ENCODE measurements at regions of chr5 and their contacts with region 1.

Region 1: DNA sequence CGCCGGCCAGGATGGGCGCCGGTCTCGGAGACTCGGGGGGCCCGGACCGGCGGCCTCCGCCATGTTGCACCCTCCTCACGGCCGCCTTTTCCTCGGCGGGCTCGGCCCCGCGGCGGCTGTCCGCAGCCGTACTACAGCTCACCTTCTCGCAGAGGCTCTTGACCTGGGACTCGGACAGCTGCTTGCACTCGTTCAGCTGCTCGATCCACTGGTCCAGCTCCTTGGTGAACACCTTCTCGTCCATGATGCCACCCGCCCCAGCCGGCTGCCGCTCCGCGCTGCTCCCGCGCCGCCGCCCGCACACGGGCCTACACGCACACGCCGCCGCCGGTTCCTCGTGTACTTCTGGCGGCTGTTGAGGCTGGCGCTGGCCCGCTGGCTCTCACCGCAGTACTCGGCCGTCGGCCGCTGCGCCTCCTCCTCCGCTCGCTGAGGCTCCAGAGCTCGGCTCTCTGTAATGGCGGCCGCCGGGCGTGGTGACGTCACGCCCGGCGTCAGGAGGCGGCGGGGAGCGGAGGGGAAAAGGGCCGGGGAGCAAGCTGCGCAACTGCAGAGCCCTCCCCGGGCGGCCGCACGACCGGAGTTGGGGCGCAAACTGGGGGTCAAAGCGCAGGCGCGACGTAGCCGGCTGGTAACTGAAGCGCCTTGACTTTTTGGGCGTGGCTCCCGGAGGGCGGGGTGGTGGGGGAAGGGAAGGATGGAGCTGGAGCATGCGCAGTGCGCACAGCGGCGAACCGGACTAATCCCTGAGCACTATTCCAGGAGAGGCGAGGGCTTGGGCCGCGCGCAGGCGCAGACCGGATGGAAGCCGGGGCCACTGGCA is at the start of gene PPP2CA:
- DNase-seq: peak; percentile 99
- ATAC-seq: peak; percentile 88
- H3K4me3 Mint-ChIP-seq: peak within 1 kb of the TSS; percentile 97
- H3K27ac Mint-ChIP-seq: peak within 1 kb of the TSS; percentile 98
- H3K4me1 Mint-ChIP-seq: peaks cover 47% of the 10 kb centered on the region
- H3K27me3 Mint-ChIP-seq: no peaks in the 10 kb centered on the region
- total RNA-seq, gene PPP2CA: 148 to 154 TPM

Region 2: GRCh38 chr5:132963175-132964104 is 1262.4 kb before region 1 on chr5 and contains the start of gene AFF4:
- CTCF ChIA-PET with region 1: no interaction called
- POLR2A ChIA-PET with region 1: interaction called, 3 read pairs
- intact Hi-C with region 1: loop called in 1 of 2 experiments (anchors 5 kb)
- DNase-seq: peak; percentile 94
- ATAC-seq: peak; percentile 92
- H3K4me3 Mint-ChIP-seq: peak within 1 kb of the TSS; percentile 96
- H3K27ac Mint-ChIP-seq: peak within 1 kb of the TSS; percentile 99
- H3K4me1 Mint-ChIP-seq: peaks cover 32% of the 10 kb centered on the region
- H3K27me3 Mint-ChIP-seq: no peaks in the 10 kb centered on the region
- total RNA-seq, gene AFF4: 20.9 to 29.3 TPM

Region 3: DNA sequence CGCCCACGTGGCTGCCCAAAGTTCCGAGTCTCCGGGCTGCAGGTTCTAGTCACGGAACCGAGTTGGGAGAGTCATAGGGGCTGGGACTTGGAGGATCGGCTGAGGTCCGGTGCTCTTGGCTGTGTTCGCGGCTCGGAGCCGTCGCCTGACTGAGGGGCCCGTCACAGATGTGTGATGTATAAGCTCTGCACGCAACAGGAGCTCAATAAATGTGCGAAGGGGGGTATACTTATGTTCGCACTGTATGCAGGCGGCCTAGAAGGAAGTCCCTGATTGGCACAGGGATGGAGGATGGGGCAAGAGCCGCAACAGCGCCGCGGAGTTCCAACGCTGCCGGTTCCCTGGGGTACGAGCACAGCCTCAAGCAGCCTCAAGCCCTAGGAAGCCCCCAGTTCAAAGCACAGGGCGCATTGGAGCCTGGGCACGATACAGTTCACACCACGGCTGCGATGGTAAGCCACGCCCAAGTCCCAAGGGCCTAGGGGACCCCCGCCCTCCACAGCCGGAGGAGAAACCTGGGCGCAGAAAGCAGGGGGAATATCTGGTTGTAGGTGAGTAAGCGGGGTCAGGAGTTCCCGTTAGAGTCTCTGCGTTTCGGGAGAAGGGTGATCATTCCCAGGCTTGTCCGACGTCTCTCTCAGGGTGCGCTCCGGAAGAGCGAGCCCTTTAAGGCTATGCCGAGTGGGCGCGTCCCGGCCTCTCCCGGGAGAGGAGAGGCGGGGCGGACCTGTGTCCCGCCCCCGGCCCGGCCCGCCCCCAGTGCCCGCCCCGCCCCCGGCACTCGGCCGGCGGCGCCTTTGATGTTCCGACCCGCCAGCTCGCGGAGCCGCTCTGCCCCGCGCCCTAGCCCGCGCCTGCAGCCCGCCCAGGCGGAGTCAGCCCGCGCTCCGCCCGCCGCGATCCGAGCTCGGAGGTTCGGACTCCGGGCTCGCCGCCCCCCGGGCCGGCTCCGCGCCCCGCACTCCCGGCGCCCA is 111.6 kb before region 1 on chr5 and contains the start of gene TCF7:
- CTCF ChIA-PET with region 1: no interaction called
- POLR2A ChIA-PET with region 1: no interaction called
- intact Hi-C with region 1: loop called in 1 of 2 experiments (anchors 5 kb)
- DNase-seq: peak; percentile 88
- ATAC-seq: peak; percentile 40
- H3K4me3 Mint-ChIP-seq: peak within 1 kb of the TSS; percentile 85
- H3K27ac Mint-ChIP-seq: peak within 1 kb of the TSS; percentile 97
- H3K4me1 Mint-ChIP-seq: peaks cover 61% of the 10 kb centered on the region
- H3K27me3 Mint-ChIP-seq: no peaks in the 10 kb centered on the region
- total RNA-seq, gene TCF7: 94.8 to 117 TPM

Region 4: DNA sequence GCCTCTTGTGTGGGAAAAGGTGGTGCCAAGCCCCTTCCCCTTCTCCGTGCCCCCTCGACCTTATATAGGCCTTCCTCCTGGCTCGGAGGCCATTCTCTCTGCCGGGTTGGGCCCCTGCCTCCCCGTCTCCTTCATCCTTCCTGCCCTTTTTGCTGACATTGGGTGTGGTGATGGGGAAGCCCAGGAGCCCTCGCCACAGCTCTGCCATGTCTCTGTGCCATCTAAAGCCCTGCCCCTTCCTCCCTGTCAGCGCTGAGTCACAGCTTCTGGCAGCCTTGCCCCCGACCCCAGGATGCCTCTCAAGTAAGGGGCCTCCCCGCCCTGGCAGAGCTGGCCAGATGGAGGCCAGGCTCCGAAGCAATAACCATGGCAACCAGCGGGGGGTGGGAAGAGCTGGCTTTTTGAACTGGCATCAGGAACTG is 330.1 kb after region 1 on chr5:
- CTCF ChIA-PET with region 1: interaction called, 3 read pairs
- POLR2A ChIA-PET with region 1: no interaction called
- intact Hi-C with region 1: loop called in 1 of 2 experiments (anchors 1 kb)
- DNase-seq: peak; percentile 96
- ATAC-seq: peak; percentile 97
- H3K4me3 Mint-ChIP-seq: peak overlapping the region; percentile 72
- H3K27ac Mint-ChIP-seq: peak overlapping the region; percentile 99
- H3K4me1 Mint-ChIP-seq: peaks cover 38% of the 10 kb centered on the region
- H3K27me3 Mint-ChIP-seq: no peaks in the 10 kb centered on the region

Region 5: GRCh38 chr5:134738133-134738962 is 512.5 kb after region 1 on chr5 and contains the start of gene CAMLG:
- CTCF ChIA-PET with region 1: interaction called, 4 read pairs
- POLR2A ChIA-PET with region 1: no interaction called
- intact Hi-C with region 1: loop called in 1 of 2 experiments (anchors 1 kb)
- DNase-seq: peak; percentile 99
- ATAC-seq: peak; percentile 97
- H3K4me3 Mint-ChIP-seq: peak within 1 kb of the TSS; percentile 94
- H3K27ac Mint-ChIP-seq: peak within 1 kb of the TSS; percentile 95
- H3K4me1 Mint-ChIP-seq: peaks cover 27% of the 10 kb centered on the region
- H3K27me3 Mint-ChIP-seq: no peaks in the 10 kb centered on the region
- total RNA-seq, gene CAMLG: 19.8 to 35.2 TPM

Region 6: GRCh38 chr5:134873987-134874830 is 648.4 kb after region 1 on chr5 and contains the start of gene TXNDC15:
- CTCF ChIA-PET with region 1: no interaction called
- POLR2A ChIA-PET with region 1: no interaction called
- intact Hi-C with region 1: loop called in 1 of 2 experiments (anchors 10 kb)
- DNase-seq: peak; percentile 90
- ATAC-seq: peak; percentile 83
- H3K4me3 Mint-ChIP-seq: peak within 1 kb of the TSS; percentile 88
- H3K27ac Mint-ChIP-seq: peak within 1 kb of the TSS; percentile 97
- H3K4me1 Mint-ChIP-seq: peaks cover 37% of the 10 kb centered on the region
- H3K27me3 Mint-ChIP-seq: no peaks in the 10 kb centered on the region
- total RNA-seq, gene TXNDC15: 16.6 to 29.1 TPM

Measured in activated CD4-positive, alpha-beta T cell treated with anti-CD3 and anti-CD28 coated beads for 36 hours (primary cell).